Calu3 (cell line): ENCODE measurements at regions of chr11 and their contacts with region 1.

Region 1: DNA sequence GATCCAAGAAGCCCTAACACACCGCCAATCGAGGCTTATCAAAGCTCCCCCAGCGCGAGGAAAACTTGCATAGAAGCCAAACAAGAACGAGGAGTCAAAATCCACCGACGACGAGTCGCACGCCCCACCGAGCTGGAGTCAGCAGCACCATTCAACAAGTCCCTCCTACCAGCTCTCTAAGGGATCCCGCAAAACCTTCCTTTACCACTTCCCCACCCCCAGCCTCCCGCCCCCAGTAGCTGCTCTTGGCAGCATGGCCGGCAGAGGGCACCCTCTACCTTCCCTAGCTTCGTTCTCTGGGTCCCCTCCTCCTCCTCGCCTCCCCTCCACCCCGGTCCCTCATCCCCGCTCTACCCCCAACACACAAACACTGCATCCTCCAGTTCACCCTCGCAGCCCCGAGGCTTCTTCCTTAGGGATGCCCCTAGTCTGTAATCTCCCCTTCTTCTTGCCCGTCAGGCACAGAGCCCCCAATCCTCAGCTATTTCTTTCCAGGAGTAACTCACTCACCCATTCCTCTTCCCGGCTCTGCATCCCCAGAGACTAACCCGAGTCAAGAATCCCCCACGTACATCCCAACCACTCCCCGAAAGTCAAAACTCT is 1.3 kb downstream of the BDNF start:
- DNase-seq: peak; percentile 92
- H3K4me3 Mint-ChIP-seq: peak overlapping the region; percentile 82
- H3K27ac Mint-ChIP-seq: peak overlapping the region; percentile 42
- H3K4me1 Mint-ChIP-seq: peaks cover 32% of the 10 kb centered on the region
- H3K27me3 Mint-ChIP-seq: no peaks in the 10 kb centered on the region
- CTCF ChIP-seq: peak; percentile 81

Region 2: DNA sequence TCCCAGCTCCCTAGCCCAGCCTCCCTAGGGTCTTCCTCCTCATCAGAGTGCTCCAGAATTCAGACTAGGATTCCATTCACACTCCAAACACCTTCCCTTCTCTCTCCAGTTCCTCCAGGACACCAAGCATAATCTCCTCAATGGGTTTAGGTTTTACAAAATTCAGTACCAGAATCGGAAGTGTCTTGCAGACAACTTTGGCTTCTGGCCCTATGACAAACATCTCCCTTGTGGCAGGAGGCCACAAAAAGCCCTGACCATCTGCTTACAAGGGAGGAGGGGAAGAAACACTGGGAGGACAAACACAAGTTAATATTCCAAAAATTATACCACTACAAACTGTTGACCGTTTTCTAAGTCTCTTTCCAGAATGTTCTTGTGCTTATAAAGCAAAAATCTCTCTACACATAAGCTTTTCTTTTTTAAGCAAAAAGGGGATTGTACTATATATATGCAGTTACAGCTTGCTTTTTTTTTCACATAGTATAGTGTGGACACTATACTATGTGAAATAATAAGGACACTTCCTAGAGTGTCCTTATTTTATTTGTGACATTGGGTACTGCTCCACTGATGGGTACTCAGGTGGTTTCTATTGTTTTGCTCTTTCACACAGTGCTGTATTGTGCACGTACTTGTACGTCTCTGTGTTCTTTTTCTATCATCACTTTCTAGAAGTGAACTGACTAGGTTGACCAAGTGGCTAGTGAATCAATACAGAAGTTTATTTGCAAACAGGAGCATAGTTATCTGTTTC is 77.4 kb before region 1 on chr11:
- CTCF ChIA-PET with region 1: no interaction called
- intact Hi-C with region 1: no loop called
- DNase-seq: no peak
- H3K4me3 Mint-ChIP-seq: no peak overlapping the region
- H3K27ac Mint-ChIP-seq: no peak overlapping the region
- H3K4me1 Mint-ChIP-seq: no peaks in the 10 kb centered on the region
- H3K27me3 Mint-ChIP-seq: peaks cover 49% of the 10 kb centered on the region
- CTCF ChIP-seq: no peak

Region 3: GRCh38 chr11:27673979-27674663 is 24.9 kb before region 1 on chr11:
- CTCF ChIA-PET with region 1: no interaction called
- intact Hi-C with region 1: loop called (anchors 1 kb)
- DNase-seq: no peak
- H3K4me3 Mint-ChIP-seq: no peak overlapping the region
- H3K27ac Mint-ChIP-seq: no peak overlapping the region
- H3K4me1 Mint-ChIP-seq: no peaks in the 10 kb centered on the region
- H3K27me3 Mint-ChIP-seq: no peaks in the 10 kb centered on the region
- CTCF ChIP-seq: no peak

Region 4: DNA sequence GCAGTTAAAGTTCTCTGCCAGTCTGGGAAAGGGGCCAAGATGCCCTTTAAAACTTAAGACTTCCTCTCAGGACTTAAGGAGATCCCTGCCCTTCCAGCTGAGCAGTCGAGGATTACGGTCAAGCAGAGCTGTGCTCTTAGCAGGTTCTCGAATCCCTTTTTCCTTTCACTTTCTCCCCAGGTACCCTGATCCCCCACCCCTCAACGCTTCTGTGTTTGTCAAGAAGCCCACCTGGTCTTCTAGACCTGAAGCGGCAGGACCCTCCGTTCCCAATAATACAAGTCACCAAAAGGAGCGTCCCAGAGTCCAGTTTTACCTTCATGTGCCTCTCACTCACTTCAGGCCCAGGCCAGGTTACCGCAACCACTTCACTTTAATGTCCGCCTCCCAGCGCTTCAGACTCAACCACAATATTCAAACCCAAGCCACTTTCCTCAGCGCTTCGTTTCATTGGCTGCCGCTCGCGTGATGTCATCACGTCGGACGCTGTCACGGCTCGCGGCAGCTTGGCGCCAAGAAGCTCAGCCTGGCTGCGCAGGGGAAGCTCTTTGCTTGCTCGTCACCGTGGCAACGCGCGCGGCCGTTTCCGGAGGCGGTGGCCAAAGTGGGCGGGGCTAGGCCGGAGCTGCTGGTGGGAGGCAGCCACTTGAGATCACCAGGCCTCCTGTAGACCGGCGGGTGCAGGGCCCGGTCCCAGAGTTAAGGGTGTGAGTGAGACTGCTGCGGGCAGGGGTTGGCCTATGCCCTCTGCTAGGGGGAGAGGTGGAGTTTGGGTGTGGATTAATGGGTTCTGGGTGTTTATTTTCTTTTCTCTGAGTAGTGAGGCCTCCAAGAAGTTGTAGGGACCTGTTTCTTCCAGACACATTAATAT is 409.0 kb after region 1 on chr11 and contains the starts of genes KIF18A and METTL15:
- CTCF ChIA-PET with region 1: interaction called, 20 read pairs
- intact Hi-C with region 1: loop called (anchors 5 kb)
- DNase-seq: peak; percentile 99
- H3K4me3 Mint-ChIP-seq: peak within 1 kb of the TSS; percentile 87
- H3K27ac Mint-ChIP-seq: peak within 1 kb of the TSS; percentile 97
- H3K4me1 Mint-ChIP-seq: peaks cover 22% of the 10 kb centered on the region
- H3K27me3 Mint-ChIP-seq: no peaks in the 10 kb centered on the region
- CTCF ChIP-seq: no peak
- total RNA-seq, gene KIF18A: 29.9 and 31.5 TPM in 2 replicates
- total RNA-seq, gene METTL15: 19.0 and 19.4 TPM in 2 replicates

Region 5: GRCh38 chr11:28529540-28530410 is 830.8 kb after region 1 on chr11:
- CTCF ChIA-PET with region 1: interaction called, 18 read pairs
- intact Hi-C with region 1: loop called (anchors 1 kb)
- DNase-seq: peak; percentile 22
- H3K4me3 Mint-ChIP-seq: no peak overlapping the region
- H3K27ac Mint-ChIP-seq: no peak overlapping the region
- H3K4me1 Mint-ChIP-seq: no peaks in the 10 kb centered on the region
- H3K27me3 Mint-ChIP-seq: no peaks in the 10 kb centered on the region
- CTCF ChIP-seq: peak; percentile 10

Region 6: GRCh38 chr11:28756977-28757376 is 1058.0 kb after region 1 on chr11:
- CTCF ChIA-PET with region 1: no interaction called
- intact Hi-C with region 1: loop called (anchors 1 kb)
- DNase-seq: no peak
- H3K4me3 Mint-ChIP-seq: no peak overlapping the region
- H3K27ac Mint-ChIP-seq: peak overlapping the region; percentile 90
- H3K4me1 Mint-ChIP-seq: peaks cover 54% of the 10 kb centered on the region
- H3K27me3 Mint-ChIP-seq: no peaks in the 10 kb centered on the region
- CTCF ChIP-seq: no peak

Region 7: DNA sequence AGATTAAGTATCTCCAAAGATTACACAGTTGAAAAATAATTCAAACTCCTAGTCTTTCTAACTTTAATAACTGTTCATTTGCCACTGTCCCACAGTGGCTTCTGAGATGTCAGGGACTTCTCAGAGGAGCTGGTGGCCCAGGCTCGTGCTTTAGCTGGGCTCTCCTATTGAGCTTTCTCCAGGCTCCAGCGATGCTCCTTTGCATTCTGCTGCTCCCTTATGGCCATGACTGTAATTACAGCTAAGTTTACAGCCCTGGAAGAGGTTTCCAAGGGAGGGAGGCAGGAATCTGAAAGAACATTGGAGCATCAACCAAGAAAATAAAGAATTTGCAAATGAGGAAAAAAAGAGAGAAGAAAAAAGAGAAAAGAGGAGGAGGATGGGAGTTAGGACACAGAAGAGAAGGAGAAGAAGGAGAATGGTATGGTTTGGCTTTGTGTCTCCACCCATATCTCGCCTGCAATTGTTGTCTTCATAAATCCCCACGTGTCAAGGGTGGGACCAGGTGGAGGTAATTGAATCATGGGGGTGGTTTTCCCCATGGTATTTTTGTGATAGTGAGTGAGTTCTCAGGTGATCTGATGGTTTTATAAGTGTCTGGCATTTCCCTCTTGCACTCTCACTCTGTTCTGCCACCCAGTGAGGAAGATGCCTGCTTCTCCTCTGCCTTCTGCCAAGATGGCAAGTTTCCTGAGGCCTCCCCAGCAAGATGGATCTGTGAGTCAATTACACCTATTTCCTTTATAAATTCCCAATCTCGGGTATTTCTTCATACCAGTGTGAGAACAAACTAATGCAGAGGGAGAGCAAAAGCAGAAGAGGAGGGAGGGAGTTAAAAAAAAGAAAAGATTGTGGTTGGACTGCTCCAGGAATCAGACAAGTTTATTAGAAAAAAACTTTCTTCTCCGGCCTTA is 1460.8 kb after region 1 on chr11:
- CTCF ChIA-PET with region 1: interaction called, 10 read pairs
- intact Hi-C with region 1: loop called (anchors 2 kb)
- DNase-seq: peak; percentile 71
- H3K4me3 Mint-ChIP-seq: no peak overlapping the region
- H3K27ac Mint-ChIP-seq: no peak overlapping the region
- H3K4me1 Mint-ChIP-seq: peaks cover 15% of the 10 kb centered on the region
- H3K27me3 Mint-ChIP-seq: no peaks in the 10 kb centered on the region
- CTCF ChIP-seq: peak; percentile 78

Region 8: GRCh38 chr11:29333993-29334775 is 1635.2 kb after region 1 on chr11:
- CTCF ChIA-PET with region 1: interaction called, 21 read pairs
- intact Hi-C with region 1: loop called (anchors 2 kb)
- DNase-seq: peak; percentile 10
- H3K4me3 Mint-ChIP-seq: no peak overlapping the region
- H3K27ac Mint-ChIP-seq: no peak overlapping the region
- H3K4me1 Mint-ChIP-seq: peaks cover 37% of the 10 kb centered on the region
- H3K27me3 Mint-ChIP-seq: no peaks in the 10 kb centered on the region
- CTCF ChIP-seq: peak; percentile 44